Transverse colon (tissue), 4 donors: ENCODE measurements at regions of chr9 and their contacts with region 1.

Region 1: DNA sequence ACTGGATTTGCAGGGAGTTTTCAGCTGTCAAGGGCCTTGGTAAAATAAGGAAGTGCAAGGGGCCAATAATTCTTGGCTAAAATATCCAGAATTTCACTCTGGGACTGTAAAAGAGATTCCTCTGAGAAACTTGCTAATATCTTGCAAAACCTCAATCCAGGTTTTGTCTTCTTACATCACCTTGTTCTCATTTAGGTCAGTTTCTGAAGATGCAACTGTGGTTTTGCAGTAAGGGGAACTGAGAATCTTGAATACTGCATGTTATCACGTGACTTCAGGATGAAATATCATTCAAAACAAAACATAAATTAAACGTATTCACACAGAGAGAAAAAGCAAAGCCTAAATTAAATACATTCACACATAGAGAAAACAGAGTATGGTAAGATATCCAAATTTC is 35.0 kb upstream of the RIC1 start:
- DNase-seq: no peak
- H3K4me3 ChIP-seq: no peak overlapping the region
- H3K27ac ChIP-seq: no peak overlapping the region
- H3K4me1 ChIP-seq: peaks cover 0 to 3% (median 0%) of the 10 kb centered on the region in 4 donors
- H3K27me3 ChIP-seq: no peaks in the 10 kb centered on the region
- CTCF ChIP-seq: no peak
- EP300 ChIP-seq: no peak
- POLR2A ChIP-seq: no peak

Region 2: DNA sequence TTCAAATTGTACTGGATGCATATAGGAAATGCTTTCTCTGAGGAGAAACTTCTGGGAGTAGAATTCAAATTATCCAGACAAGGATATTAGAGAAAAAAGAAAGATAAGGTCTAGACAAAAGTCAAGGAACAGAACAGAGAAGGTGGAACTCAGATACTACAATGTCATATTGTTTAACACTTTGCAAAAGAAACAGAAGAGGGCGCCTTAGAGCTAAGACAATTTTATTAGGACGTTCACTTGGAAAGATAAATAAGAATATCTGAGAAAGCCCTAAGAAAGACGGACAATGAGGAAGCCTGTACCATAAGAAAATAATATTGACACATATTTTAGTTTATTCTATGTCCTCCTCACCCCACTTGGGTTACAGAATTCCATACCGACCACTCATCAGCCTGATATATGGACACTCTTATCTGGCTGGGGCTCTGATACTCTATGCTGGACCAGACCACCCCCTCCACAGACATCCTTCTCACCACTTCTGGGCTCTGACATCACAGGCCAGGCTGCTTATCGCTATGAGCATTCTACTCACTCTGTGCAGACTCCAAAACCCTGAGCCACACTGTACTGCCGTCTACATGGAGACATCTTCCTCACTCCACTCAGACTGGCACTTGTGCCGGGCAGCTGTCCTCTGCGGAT is 843.8 kb before region 1 on chr9:
- in situ Hi-C with region 1: loop called (anchors 10 to 25 kb)
- intact Hi-C with region 1: no loop called
- DNase-seq: no peak
- H3K4me3 ChIP-seq: no peak overlapping the region
- H3K27ac ChIP-seq: no peak overlapping the region
- H3K4me1 ChIP-seq: no peaks in the 10 kb centered on the region
- H3K27me3 ChIP-seq: no peaks in the 10 kb centered on the region
- CTCF ChIP-seq: peak; percentile 44 to 63 (median 52)
- EP300 ChIP-seq: no peak
- POLR2A ChIP-seq: no peak

Region 3: GRCh38 chr9:5195453-5195852 is 398.5 kb before region 1 on chr9:
- in situ Hi-C with region 1: loop called in 2 of 4 experiments (anchors 10 to 25 kb)
- intact Hi-C with region 1: no loop called
- DNase-seq: no peak
- H3K4me3 ChIP-seq: no peak overlapping the region
- H3K27ac ChIP-seq: no peak overlapping the region
- H3K4me1 ChIP-seq: no peaks in the 10 kb centered on the region
- H3K27me3 ChIP-seq: peaks cover 6% of the 10 kb centered on the region
- CTCF ChIP-seq: no peak
- EP300 ChIP-seq: no peak
- POLR2A ChIP-seq: no peak

Region 4: GRCh38 chr9:5450359-5451091 is 143.4 kb before region 1 on chr9 and contains the start of gene CD274:
- in situ Hi-C with region 1: loop called in 1 of 4 experiments (anchors 10 kb)
- intact Hi-C with region 1: no loop called
- DNase-seq: peak; percentile 94
- H3K4me3 ChIP-seq: peak within 1 kb of the TSS; percentile 28 to 56 (median 36)
- H3K27ac ChIP-seq: peak within 1 kb of the TSS; percentile 78 to 96 (median 86)
- H3K4me1 ChIP-seq: peaks cover 0 to 25% (median 4%) of the 10 kb centered on the region in 4 donors
- H3K27me3 ChIP-seq: no peaks in the 10 kb centered on the region
- CTCF ChIP-seq: peak; percentile 54 to 84 (median 58)
- EP300 ChIP-seq: no peak
- POLR2A ChIP-seq: no peak
- total RNA-seq, gene CD274: 0.80 to 2.9 (median 1.2) TPM in 3 of 4 donors, not detected in the other